HEK293T (cell line): ENCODE measurements at regions of chr3 and their contacts with region 1.

Region 1: DNA sequence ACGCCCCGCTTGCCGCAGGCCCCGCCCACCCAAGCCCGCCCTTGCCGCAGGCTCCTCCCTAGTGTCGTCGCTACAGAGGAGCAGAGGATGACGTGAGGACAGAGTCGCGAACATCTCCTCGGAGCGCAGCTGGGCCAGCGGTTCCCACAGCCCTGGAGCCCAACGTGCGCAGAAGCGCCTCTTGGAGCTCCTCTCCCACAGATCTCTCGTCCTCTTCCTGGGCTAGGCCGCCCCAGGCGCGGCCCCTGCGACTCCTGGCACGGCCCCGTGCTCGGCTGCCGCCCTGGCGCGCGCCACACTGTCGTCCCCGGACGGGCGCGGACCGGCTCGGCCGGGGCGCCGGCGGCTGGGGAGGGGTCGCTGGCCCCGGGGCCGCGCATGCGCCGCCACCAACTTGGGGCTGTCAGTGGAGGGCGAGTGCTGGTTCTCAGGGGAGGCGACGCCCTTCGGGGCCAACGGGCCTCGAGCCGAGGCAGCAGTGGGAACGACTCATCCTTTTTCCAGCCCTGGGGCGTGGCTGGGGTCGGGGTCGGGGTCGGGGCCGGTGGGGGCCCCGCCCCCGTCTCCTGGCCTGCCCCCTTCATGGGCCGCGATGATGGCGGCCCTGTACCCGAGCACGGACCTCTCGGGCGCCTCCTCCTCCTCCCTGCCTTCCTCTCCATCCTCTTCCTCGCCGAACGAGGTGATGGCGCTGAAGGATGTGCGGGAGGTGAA is at the start of gene TRPC1:
- DNase-seq: peak; percentile 97

Region 2: GRCh38 chr3:142578327-142579223 is 145.6 kb before region 1 on chr3 and contains the start of gene ATR:
- CTCF ChIA-PET with region 1: no interaction called
- POLR2A ChIA-PET with region 1: interaction called, 12 read pairs
- DNase-seq: peak; percentile 91

Region 3: DNA sequence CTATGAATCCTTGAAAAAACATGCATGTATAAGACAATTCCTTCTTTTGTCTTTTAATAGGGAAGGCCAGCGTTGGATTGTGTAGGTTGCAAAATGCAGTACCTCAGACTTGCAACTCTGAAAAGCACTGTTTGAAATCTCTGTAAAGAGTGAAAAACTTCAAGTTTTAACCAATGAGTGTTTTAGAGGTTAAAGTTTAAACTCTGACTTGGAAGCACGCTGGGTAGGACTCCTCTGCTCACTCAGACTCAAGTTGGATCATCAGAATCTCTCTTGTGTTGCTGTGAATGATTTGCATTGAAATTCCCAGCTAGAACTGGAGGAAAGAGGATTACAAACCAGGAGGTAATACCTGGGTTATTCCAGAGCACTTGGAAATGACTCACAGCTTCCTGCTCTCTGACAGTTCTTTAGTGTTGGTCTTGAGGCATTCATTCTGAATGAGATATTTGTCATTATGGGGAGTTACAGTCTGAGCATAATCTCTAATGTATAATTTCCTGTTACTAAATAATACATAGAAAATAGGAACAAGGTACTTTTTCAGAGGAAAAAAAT is 78.8 kb before region 1 on chr3:
- CTCF ChIA-PET with region 1: no interaction called
- POLR2A ChIA-PET with region 1: no interaction called
- DNase-seq: no peak

Region 4: DNA sequence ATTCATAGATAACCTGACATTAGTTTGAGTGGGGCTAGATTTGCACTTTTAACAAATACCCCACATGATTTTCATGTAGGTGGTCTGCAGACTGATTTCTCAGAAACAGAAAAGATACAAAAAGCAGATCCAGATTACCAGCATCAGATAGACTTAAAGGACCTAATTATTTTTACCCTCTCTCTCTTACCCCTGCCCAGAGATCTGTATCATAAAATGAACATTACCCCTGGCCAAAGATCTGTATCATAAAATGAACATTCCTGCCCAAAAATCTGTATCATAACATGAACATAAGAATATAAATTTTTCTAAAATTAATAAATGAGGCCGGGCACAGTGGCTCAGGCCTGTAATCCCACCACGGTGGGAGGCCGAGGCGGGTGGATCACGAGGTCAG is 14.9 kb before region 1 on chr3:
- CTCF ChIA-PET with region 1: no interaction called
- POLR2A ChIA-PET with region 1: interaction called, 10 read pairs
- DNase-seq: no peak

Region 5: GRCh38 chr3:142875583-142876207 is 151.6 kb after region 1 on chr3:
- CTCF ChIA-PET with region 1: no interaction called
- POLR2A ChIA-PET with region 1: no interaction called
- DNase-seq: no peak